Left ventricle myocardium inferior (tissue), 1 donor: ENCODE measurements at regions of chr7 and their contacts with region 1.

Region 1: GRCh38 chr7:42479816-42480633 is 243.0 kb upstream of the GLI3 start:
- DNase-seq: no peak
- H3K4me3 ChIP-seq: no peak overlapping the region
- H3K27ac ChIP-seq: peak overlapping the region; percentile 68
- H3K4me1 ChIP-seq: peaks cover 19% of the 10 kb centered on the region
- H3K27me3 ChIP-seq: no peaks in the 10 kb centered on the region
- CTCF ChIP-seq: no peak

Region 2: DNA sequence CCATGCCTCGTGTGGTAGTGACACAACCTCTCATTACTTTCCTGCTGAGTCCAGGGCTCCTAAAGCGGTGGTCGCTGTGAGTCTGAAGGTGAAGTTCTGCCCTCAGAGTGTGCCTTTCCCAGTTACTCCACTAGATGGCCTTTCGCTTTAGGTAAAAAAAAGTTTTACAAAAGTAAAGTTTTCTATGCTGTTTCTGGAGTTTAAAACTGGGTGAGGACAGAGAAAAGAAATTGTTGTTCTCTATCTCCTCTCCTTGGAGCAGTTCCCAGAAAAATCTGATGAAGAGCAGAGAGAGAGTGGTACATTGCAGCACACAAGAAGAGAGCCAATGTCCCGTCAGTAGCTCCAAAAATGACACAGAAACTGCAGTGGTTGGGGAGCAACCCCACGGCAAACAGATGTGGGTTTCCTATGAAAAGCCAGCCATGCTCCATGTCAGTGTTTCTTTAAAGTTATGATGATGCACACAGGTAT is 500.2 kb before region 1 on chr7:
- intact Hi-C with region 1: loop called (anchors 10 kb)
- DNase-seq: no peak
- H3K4me3 ChIP-seq: no peak overlapping the region
- H3K27ac ChIP-seq: no peak overlapping the region
- H3K4me1 ChIP-seq: peaks cover 32% of the 10 kb centered on the region
- H3K27me3 ChIP-seq: no peaks in the 10 kb centered on the region
- CTCF ChIP-seq: peak; percentile 83

Region 3: GRCh38 chr7:42053834-42054233 is 426.2 kb before region 1 on chr7:
- intact Hi-C with region 1: no loop called
- DNase-seq: no peak
- H3K4me3 ChIP-seq: no peak overlapping the region
- H3K27ac ChIP-seq: no peak overlapping the region
- H3K4me1 ChIP-seq: no peaks in the 10 kb centered on the region
- H3K27me3 ChIP-seq: no peaks in the 10 kb centered on the region
- CTCF ChIP-seq: no peak